ENCODE measurements at regions of chr13 and their contacts with region 1.

Region 1: GRCh38 chr13:113904411-113904810 is 40.5 kb upstream of the GAS6 start:
- DNase-seq: no peak
- H3K4me3 ChIP-seq: no peak overlapping the region
- H3K27ac ChIP-seq: no peak overlapping the region
- H3K4me1 ChIP-seq: no peaks in the 10 kb centered on the region
- H3K27me3 ChIP-seq: no peaks in the 10 kb centered on the region
- CTCF ChIP-seq: peak in 3 of 4 experiments; percentile 33 to 56 (median 42)
- POLR2A ChIP-seq: no peak

Region 2: GRCh38 chr13:113837554-113838355 is 66.7 kb before region 1 on chr13:
- intact Hi-C with region 1: loop called (anchors 5 kb)
- DNase-seq: peak; percentile 95
- H3K4me3 ChIP-seq: peak overlapping the region in 1 of 2 donors; percentile 7
- H3K27ac ChIP-seq: peak overlapping the region; percentile 86 to 90
- H3K4me1 ChIP-seq: peaks cover 18% of the 10 kb centered on the region
- H3K27me3 ChIP-seq: peaks cover 4% of the 10 kb centered on the region
- CTCF ChIP-seq: no peak
- POLR2A ChIP-seq: peak; percentile 37

Region 3: GRCh38 chr13:113863436-113864272 is 40.8 kb before region 1 on chr13 and contains the start of gene GAS6:
- intact Hi-C with region 1: loop called (anchors 5 kb)
- DNase-seq: peak; percentile 55
- H3K4me3 ChIP-seq: peak within 1 kb of the TSS; percentile 57 to 59
- H3K27ac ChIP-seq: peak within 1 kb of the TSS; percentile 80 to 81
- H3K4me1 ChIP-seq: no peaks in the 10 kb centered on the region
- H3K27me3 ChIP-seq: no peaks in the 10 kb centered on the region
- CTCF ChIP-seq: peak in 1 of 4 experiments; percentile 28
- POLR2A ChIP-seq: no peak
- total RNA-seq, gene GAS6: 116 to 432 TPM